Left colon (tissue), 2 donors: ENCODE measurements at regions of chr5 and their contacts with region 1.

Region 1: GRCh38 chr5:148730943-148731861 is 76.9 kb upstream of the HTR4 start:
- DNase-seq: peak; percentile 68 to 78
- ATAC-seq: peak; percentile 87

Region 2: DNA sequence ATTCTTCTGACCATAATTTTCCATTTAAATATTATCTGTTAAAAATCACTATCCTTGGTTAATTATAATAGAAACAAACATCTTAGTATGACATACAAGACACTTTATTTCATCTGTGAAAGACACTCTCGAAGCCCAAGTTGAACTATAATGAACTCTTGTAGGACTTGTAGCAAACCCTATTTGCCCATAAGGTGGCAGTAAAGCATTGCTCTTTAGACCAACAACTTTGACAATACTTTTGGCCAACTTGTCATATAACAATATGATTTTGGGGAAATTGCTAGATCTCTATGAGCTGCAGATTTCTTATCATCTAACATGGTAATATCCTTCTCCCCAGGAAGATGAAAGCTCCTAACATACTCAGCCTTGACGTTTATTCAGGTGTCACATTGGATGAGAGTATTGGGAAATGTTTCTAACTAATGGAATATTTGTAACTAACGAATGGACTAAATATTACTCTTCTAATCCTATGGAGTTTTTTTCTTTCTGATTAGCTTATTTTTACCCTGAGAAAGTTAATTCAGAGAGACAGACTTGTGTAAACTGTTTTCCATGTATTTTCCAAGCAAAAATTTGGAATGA is 551.9 kb before region 1 on chr5:
- intact Hi-C with region 1: loop called in 1 of 2 experiments (anchors 5 kb)
- DNase-seq: no peak
- ATAC-seq: peak; percentile 90

Region 3: DNA sequence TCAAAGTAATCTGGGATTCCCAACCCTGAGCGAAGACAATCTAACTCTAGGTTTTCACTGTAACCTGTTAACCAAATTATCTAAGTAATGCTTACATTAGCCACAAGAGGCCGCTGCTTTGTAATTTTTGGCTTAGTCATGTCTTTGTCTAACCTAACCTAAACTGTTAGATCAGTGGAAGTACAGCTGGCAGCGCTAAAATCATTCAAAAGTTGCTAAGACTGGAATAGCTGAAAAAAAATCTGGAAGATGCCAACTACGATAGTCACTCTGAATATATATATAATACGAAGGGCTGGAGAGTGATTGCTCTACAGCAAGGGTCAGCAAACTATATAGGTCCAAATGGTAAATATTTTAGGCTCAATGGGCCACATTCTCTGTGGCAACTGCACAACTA is 287.2 kb before region 1 on chr5:
- intact Hi-C with region 1: loop called (anchors 5 to 10 kb)
- DNase-seq: peak in 1 of 2 donors; percentile 22
- ATAC-seq: peak; percentile 67

Region 4: GRCh38 chr5:148849461-148849860 is 118.3 kb after region 1 on chr5:
- intact Hi-C with region 1: no loop called
- DNase-seq: peak in 1 of 2 donors; percentile 35
- ATAC-seq: peak; percentile 78

Region 5: GRCh38 chr5:149002053-149002452 is 270.9 kb after region 1 on chr5:
- intact Hi-C with region 1: loop called in 1 of 2 experiments (anchors 10 kb)
- DNase-seq: no peak
- ATAC-seq: no peak

Region 6: GRCh38 chr5:149114403-149115312 is 383.5 kb after region 1 on chr5:
- intact Hi-C with region 1: loop called in 1 of 2 experiments (anchors 5 kb)
- DNase-seq: peak; percentile 42 to 47
- ATAC-seq: peak; percentile 92